ENCODE measurements at regions of chr6 and their contacts with region 1.

Region 1: DNA sequence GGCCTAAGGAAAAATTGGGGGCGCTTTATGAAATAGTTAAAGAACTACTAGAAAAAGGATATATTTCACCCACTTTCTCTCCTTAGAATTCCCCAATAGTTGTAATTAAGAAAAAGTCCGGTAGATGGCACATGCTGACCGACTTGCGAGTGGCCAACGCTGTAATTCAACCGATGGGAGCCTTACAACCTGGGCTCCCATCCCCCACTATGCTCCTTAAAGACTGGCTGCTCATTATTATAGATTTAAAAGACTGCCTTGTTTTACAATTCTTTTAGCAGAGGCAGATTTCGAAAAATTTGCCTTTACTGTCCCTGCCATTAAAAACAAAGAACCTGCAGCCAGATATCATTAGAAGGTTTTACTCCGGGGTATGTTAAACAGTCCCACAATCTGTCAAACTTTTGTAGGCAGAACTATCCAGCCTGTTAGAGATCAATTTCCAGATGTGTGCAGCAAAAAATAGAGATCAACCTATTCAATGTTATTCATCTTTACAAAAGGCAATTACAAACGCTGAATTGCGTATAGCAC is 58.5 kb upstream of the PRSS16 start:
- DNase-seq: peak; percentile 45
- H3K4me3 Mint-ChIP-seq: peak overlapping the region; percentile 94
- H3K27ac Mint-ChIP-seq: peak overlapping the region; percentile 70
- H3K4me1 Mint-ChIP-seq: peaks cover 13% of the 10 kb centered on the region
- H3K27me3 Mint-ChIP-seq: peaks cover 3% of the 10 kb centered on the region

Region 2: GRCh38 chr6:27237089-27237803 is 48.3 kb after region 1 on chr6:
- intact Hi-C with region 1: loop called (anchors 2 kb)
- DNase-seq: peak; percentile 34
- H3K4me3 Mint-ChIP-seq: peak overlapping the region; percentile 70
- H3K27ac Mint-ChIP-seq: no peak overlapping the region
- H3K4me1 Mint-ChIP-seq: peaks cover 27% of the 10 kb centered on the region
- H3K27me3 Mint-ChIP-seq: peaks cover 60% of the 10 kb centered on the region

Region 3: DNA sequence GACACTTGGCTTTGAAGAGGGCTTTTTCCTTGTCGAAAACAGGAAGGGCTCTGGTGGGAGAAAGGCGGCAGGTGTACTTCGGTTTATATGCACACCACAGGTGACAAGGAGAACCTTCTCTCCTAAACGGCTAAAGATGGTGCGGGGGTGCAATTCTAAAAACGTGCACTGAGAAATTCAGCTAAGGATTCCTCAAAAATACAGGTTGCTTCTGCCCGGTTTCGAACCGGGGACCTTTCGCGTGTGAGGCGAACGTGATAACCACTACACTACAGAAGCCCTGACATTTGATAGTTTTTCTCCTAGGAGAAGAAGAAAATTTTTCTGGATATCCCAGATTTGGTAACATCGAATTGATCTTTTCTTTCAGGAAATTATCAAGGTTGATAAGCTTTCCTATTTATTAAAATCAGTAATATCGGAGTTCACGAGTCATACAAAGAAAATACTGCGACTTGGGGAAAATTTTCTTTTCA is 91.2 kb after region 1 on chr6:
- intact Hi-C with region 1: loop called (anchors 5 kb)
- DNase-seq: no peak
- H3K4me3 Mint-ChIP-seq: peak overlapping the region; percentile 68
- H3K27ac Mint-ChIP-seq: no peak overlapping the region
- H3K4me1 Mint-ChIP-seq: peaks cover 18% of the 10 kb centered on the region
- H3K27me3 Mint-ChIP-seq: peaks cover 71% of the 10 kb centered on the region

Region 4: DNA sequence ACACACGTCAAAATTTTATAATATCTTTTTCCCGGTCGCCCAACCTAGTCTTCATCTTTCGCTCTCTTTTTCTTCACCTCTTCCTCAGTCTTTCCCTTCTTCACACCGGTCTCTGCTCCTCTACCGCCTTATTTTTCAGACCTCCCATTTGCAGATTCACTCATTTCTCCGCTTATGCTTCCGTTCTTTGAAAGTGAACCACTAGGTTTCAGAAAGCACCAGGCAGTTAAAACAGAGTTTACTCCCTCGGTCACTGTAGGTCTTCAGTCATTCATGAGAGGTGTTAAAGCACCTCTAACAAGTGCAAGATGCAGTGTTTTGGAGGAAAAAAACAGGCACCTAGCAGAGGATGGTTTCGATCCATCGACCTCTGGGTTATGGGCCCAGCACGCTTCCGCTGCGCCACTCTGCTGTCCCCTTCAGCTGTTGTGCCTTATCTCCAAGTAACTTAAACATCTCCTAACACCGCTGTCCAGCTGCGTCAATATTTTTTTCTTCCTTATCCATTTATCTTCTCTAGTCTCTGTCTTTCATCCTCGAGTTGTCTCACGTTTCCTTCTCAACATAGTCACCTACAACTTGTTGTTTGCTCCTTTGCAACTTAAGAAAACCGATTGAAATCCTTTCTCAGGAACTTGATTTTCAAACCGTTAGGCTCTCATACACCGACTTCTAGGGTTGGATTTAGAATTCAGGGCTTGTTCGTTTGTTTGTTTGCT is 403.7 kb after region 1 on chr6:
- intact Hi-C with region 1: loop called (anchors 5 kb)
- DNase-seq: peak; percentile 55
- H3K4me3 Mint-ChIP-seq: no peak overlapping the region
- H3K27ac Mint-ChIP-seq: no peak overlapping the region
- H3K4me1 Mint-ChIP-seq: peaks cover 1% of the 10 kb centered on the region
- H3K27me3 Mint-ChIP-seq: peaks cover 25% of the 10 kb centered on the region

Region 5: GRCh38 chr6:27687154-27688013 is 498.4 kb after region 1 on chr6:
- intact Hi-C with region 1: loop called (anchors 5 kb)
- DNase-seq: peak; percentile 73
- H3K4me3 Mint-ChIP-seq: peak overlapping the region; percentile 88
- H3K27ac Mint-ChIP-seq: peak overlapping the region; percentile 68
- H3K4me1 Mint-ChIP-seq: peaks cover 16% of the 10 kb centered on the region
- H3K27me3 Mint-ChIP-seq: peaks cover 17% of the 10 kb centered on the region

Measured in activated T-helper 2 cell treated with anti-CD3 and anti-CD28 coated beads, Interferon-gamma antibody, Interleukin-2, Interleukin-4, amounts not matched to agents 10 μg/mL and 5 μg/mL and 100 μg/mL, durations not matched to agents 14 hours and 24 hours and 36 hours (primary cell).